H1 (cell line): ENCODE measurements at regions of chr6 and their contacts with region 1.

Region 1: DNA sequence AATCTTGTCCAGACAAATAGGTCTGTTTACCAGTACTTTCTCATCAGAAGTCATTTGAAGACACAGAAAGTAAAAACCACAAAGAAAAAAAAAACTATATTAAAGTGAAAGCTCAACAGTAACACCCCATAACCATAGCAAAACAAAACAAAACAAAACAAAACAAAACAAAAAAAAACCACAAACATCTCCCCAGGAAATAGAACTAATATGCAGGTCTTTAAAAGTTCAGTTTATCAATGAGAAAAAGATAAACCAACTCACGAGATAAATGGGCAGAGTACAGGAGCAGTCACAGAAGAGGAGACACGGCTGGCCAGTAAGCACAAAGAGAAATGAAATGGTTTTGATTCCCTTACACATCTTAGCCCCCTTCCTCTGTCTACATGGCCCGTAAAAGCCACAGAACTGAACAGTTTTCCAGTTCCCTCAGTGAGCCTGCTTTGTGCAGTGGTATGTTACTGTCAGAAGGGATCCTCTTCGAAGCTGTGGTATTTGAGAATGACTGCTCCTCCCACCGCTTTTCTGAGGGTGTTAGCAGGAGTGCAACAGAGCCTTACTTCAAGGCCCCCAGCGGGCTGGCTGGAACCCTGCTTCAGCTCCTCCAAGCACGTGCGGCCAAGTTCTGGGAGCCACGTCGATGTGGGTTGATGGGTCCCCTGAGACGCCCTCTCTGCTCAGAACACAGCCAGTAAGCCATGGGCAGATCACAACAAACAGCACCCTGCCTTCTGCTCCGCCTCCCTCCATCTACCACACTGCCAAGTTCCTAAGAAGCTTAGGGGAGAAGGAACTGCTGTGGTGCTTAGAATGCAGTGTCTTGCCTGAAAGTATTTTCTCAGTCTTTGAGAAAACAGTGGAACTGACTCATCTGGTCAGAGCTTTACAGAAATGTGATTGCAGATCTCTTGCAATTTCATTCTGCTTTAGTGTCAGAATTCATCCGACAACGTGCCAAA is 14.0 kb downstream of the UST start:
- DNase-seq: peak in 1 of 2 experiments; percentile 59
- H3K4me3 ChIP-seq: no peak overlapping the region
- H3K27ac ChIP-seq: no peak overlapping the region; the same call in 1 of the 2 replicates
- H3K4me1 ChIP-seq: peaks cover 7 to 18% (median 18%) of the 10 kb centered on the region in 4 experiments
- H3K27me3 ChIP-seq: no peaks in the 10 kb centered on the region
- CTCF ChIP-seq: no peak
- EP300 ChIP-seq: no peak
- POLR2A ChIP-seq: peak in 1 of 2 experiments; percentile 33; a peak in 1 of 3 replicates
- RAD21 ChIP-seq: peak in 1 of 2 experiments; percentile 10; a peak in 1 of 4 replicates

Region 2: DNA sequence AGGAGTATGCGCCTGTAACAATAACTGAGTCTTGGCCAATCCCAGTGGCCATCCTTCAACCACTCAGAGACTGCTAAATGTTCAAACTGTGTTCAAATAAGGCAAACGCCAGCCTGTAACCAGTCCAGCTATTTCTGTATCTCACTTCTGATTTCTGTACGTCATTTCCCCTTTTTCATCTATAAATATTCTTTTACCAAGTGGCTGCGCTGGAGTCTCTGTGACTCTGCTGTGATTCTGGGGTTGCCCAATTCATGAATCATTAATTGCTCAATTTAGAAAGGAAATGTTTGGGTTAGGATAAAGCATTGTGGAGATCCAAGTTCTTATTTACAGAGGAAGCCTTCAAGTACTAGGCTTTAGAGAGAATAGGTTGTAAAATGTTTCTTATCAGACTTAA is 103.8 kb before region 1 on chr6:
- CTCF ChIA-PET with region 1: no interaction called
- POLR2A ChIA-PET with region 1: no interaction called
- DNase-seq: no peak
- H3K4me3 ChIP-seq: no peak overlapping the region
- H3K27ac ChIP-seq: no peak overlapping the region
- H3K4me1 ChIP-seq: no peaks in the 10 kb centered on the region
- H3K27me3 ChIP-seq: no peaks in the 10 kb centered on the region
- CTCF ChIP-seq: no peak
- EP300 ChIP-seq: no peak
- POLR2A ChIP-seq: no peak
- RAD21 ChIP-seq: no peak

Region 3: DNA sequence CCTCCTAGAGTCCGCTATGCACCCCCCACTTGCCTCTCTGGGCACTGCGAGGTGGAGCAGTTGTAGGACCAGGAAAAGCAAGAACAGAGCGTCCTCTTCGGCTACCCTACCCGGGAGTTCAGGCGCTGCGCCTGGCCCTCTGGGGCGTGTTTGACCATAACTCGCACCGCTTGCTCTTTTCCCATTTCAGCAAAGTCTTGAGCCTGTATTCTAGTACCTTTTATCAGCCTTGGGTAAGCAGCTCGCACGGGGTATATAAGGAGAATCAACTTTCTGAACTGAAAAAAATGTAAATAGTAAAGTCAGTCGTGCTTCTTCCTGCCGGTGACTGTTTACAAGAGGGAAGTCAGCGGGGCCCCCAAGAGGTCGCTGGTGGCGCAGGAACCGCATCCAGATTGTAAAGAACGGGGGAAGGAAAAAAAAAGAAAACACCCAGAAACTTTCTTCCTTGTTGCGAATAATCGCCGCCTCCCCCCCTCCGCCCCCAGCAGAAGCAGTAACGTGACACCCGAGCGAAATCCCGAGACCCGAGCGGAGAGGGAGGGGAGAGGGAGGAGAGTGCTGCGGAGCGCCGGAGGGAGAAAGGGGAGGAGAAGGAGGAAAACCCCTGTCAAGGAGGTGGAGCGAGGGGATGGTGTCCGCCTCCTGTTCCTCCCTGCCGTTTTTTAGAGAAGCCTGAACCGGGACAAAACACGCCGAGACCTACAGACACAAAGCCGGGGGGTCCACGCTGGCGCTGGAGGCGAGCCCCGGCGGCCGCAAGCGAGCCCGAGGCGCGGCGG is 14.3 kb before region 1 on chr6 and contains the start of gene UST:
- CTCF ChIA-PET with region 1: interaction called, 17 read pairs
- POLR2A ChIA-PET with region 1: interaction called, 16 read pairs
- DNase-seq: peak; percentile 82 to 85
- H3K4me3 ChIP-seq: peak within 1 kb of the TSS; percentile 87 to 97 (median 90)
- H3K27ac ChIP-seq: peak within 1 kb of the TSS; percentile 73; the same call in 1 of the 2 replicates
- H3K4me1 ChIP-seq: peaks cover 7 to 18% (median 11%) of the 10 kb centered on the region in 4 experiments
- H3K27me3 ChIP-seq: no peaks in the 10 kb centered on the region
- CTCF ChIP-seq: peak; percentile 11 to 41 (median 27)
- EP300 ChIP-seq: no peak
- POLR2A ChIP-seq: no peak
- RAD21 ChIP-seq: peak; percentile 66 to 68
- total RNA-seq, gene UST: 31.9 and 34.5 TPM in 2 replicates